Breast epithelium (tissue), 4 donors: ENCODE measurements at regions of chr2 and their contacts with region 1.

Region 1: GRCh38 chr2:101958061-101958460 is 33.7 kb upstream of the IL1R2 start:
- DNase-seq: no peak
- H3K4me3 ChIP-seq: no peak overlapping the region
- H3K27ac ChIP-seq: peak overlapping the region in 1 of 2 donors; percentile 8
- H3K4me1 ChIP-seq: peaks cover 12 to 16% of the 10 kb centered on the region in 2 donors
- H3K27me3 ChIP-seq: no peaks in the 10 kb centered on the region
- CTCF ChIP-seq: no peak
- POLR2A ChIP-seq: no peak

Region 2: GRCh38 chr2:101946372-101947039 is 11.6 kb before region 1 on chr2:
- intact Hi-C with region 1: loop called (anchors 2 kb)
- DNase-seq: no peak
- H3K4me3 ChIP-seq: no peak overlapping the region
- H3K27ac ChIP-seq: no peak overlapping the region
- H3K4me1 ChIP-seq: no peaks in the 10 kb centered on the region
- H3K27me3 ChIP-seq: no peaks in the 10 kb centered on the region
- CTCF ChIP-seq: no peak
- POLR2A ChIP-seq: no peak

Region 3: DNA sequence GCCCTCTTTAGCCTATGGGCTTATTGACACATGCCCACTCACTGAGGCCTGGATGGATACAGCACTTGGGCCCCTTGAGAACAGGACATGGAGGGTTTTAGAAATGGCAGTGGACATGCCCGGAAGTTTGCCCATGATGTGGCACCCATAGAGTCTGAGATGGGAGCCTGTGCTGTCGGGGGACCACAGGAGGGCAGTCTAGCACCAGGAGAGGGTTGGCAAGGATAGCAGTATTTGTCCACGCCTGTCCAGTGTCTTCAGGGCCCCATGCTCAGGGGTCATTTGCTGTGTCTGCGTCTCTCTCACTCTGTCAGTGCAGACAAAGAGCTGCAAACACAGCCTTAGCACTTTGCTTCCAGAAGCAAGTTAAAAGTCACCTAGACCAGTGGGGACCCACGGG is 277.4 kb after region 1 on chr2:
- intact Hi-C with region 1: no loop called
- DNase-seq: no peak
- H3K4me3 ChIP-seq: no peak overlapping the region
- H3K27ac ChIP-seq: no peak overlapping the region
- H3K4me1 ChIP-seq: no peaks in the 10 kb centered on the region
- H3K27me3 ChIP-seq: no peaks in the 10 kb centered on the region
- CTCF ChIP-seq: no peak
- POLR2A ChIP-seq: no peak